Activated B cell treated with CpG ODN at 0.5 μM for 24 hours (primary cell): ENCODE measurements at regions of chr17 and their contacts with region 1.

Region 1: GRCh38 chr17:38729886-38730525 is at the start of gene CISD3:
- DNase-seq: peak; percentile 91
- ATAC-seq: peak; percentile 91
- H3K4me3 Mint-ChIP-seq: peak within 1 kb of the TSS; percentile 82
- H3K27ac Mint-ChIP-seq: peak within 1 kb of the TSS; percentile 79
- H3K4me1 Mint-ChIP-seq: peaks cover 58% of the 10 kb centered on the region
- H3K27me3 Mint-ChIP-seq: no peaks in the 10 kb centered on the region
- CTCF ChIP-seq: no peak
- total RNA-seq, gene CISD3: 11.2 and 12.1 TPM in 2 replicates

Region 2: GRCh38 chr17:38469875-38470274 is 260.1 kb before region 1 on chr17:
- CTCF ChIA-PET with region 1: no interaction called
- POLR2A ChIA-PET with region 1: no interaction called
- intact Hi-C with region 1: no loop called
- DNase-seq: no peak
- ATAC-seq: no peak
- H3K4me3 Mint-ChIP-seq: no peak overlapping the region
- H3K27ac Mint-ChIP-seq: no peak overlapping the region
- H3K4me1 Mint-ChIP-seq: no peaks in the 10 kb centered on the region
- H3K27me3 Mint-ChIP-seq: peaks cover 8% of the 10 kb centered on the region
- CTCF ChIP-seq: no peak

Region 3: GRCh38 chr17:38667099-38667786 is 62.8 kb before region 1 on chr17:
- CTCF ChIA-PET with region 1: interaction called, 10 read pairs
- POLR2A ChIA-PET with region 1: interaction called, 3 read pairs
- intact Hi-C with region 1: no loop called
- DNase-seq: peak; percentile 39
- ATAC-seq: peak; percentile 87
- H3K4me3 Mint-ChIP-seq: no peak overlapping the region
- H3K27ac Mint-ChIP-seq: no peak overlapping the region
- H3K4me1 Mint-ChIP-seq: peaks cover 8% of the 10 kb centered on the region
- H3K27me3 Mint-ChIP-seq: peaks cover 57% of the 10 kb centered on the region
- CTCF ChIP-seq: peak; percentile 92

Region 4: DNA sequence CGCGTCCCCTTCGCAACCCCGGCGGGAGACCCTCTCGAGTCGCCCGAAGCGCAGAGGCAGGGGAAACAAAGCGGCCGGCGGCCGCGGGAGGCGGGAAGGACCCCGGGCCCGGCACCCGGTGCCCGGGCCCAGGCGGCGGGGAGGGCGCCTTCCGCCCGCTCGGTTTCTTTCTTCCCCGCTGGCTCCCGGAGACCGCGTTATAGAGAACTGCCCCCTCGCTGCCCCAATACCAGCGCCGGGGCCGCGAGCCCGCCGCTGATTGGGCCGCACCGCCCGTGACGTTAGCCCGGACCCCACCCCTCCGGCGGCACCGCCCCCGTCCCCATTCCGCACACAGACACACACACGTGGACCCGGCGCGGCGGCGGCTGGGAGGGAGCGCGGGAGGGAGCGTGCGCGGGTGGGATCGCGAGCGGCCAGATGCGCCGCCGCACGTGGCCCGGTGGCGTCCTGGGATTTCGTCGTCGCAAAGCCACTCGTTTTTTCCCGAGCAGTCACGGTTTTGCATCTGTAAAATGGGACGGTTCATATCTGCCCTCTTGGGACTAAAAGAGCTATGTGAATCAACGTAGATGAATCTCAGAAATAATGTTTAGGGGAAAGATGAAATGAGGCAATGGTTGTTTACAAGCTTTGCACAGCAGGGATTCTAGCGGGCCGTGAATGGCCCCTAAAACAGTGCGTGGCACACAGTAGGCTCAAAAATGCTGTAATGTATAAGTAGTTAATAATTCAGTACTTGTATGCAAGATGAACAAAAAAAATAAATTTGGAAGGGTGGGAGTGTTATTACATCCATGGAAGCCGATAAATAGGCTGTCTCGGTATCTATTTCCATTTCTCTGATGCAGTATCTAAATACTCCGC is 55.0 kb before region 1 on chr17 and contains the start of gene EPOP:
- CTCF ChIA-PET with region 1: interaction called, 135 read pairs
- POLR2A ChIA-PET with region 1: interaction called, 9 read pairs
- intact Hi-C with region 1: loop called (anchors 1 kb)
- DNase-seq: peak; percentile 79
- ATAC-seq: peak; percentile 88
- H3K4me3 Mint-ChIP-seq: peak within 1 kb of the TSS; percentile 70
- H3K27ac Mint-ChIP-seq: no peak within 1 kb of the TSS
- H3K4me1 Mint-ChIP-seq: peaks cover 32% of the 10 kb centered on the region
- H3K27me3 Mint-ChIP-seq: peaks cover 29% of the 10 kb centered on the region
- CTCF ChIP-seq: no peak
- total RNA-seq, gene EPOP: 2.8 and 3.0 TPM in 2 replicates

Region 5: GRCh38 chr17:38868817-38869525 is 139.0 kb after region 1 on chr17:
- CTCF ChIA-PET with region 1: no interaction called
- POLR2A ChIA-PET with region 1: no interaction called
- intact Hi-C with region 1: no loop called
- DNase-seq: peak; percentile 84
- ATAC-seq: peak; percentile 53
- H3K4me3 Mint-ChIP-seq: peak overlapping the region; percentile 99
- H3K27ac Mint-ChIP-seq: peak overlapping the region; percentile 96
- H3K4me1 Mint-ChIP-seq: peaks cover 72% of the 10 kb centered on the region
- H3K27me3 Mint-ChIP-seq: peaks cover 2% of the 10 kb centered on the region
- CTCF ChIP-seq: no peak

Region 6: GRCh38 chr17:38883592-38884526 is 153.9 kb after region 1 on chr17:
- CTCF ChIA-PET with region 1: no interaction called
- POLR2A ChIA-PET with region 1: no interaction called
- intact Hi-C with region 1: no loop called
- DNase-seq: no peak
- ATAC-seq: peak; percentile 76
- H3K4me3 Mint-ChIP-seq: peak overlapping the region; percentile 38
- H3K27ac Mint-ChIP-seq: peak overlapping the region; percentile 84
- H3K4me1 Mint-ChIP-seq: peaks cover 68% of the 10 kb centered on the region
- H3K27me3 Mint-ChIP-seq: no peaks in the 10 kb centered on the region
- CTCF ChIP-seq: no peak